Naive thymus-derived CD4-positive, alpha-beta T cell (primary cell): ENCODE measurements at regions of chr3 and their contacts with region 1.

Region 1: GRCh38 chr3:148991194-148992026 is at the start of gene GYG1:
- DNase-seq: peak; percentile 56 to 78 (median 70)
- ATAC-seq: peak; percentile 91
- H3K4me3 ChIP-seq: peak within 1 kb of the TSS; percentile 77
- H3K4me3 Mint-ChIP-seq: peak within 1 kb of the TSS; percentile 70 to 91 (median 87)
- H3K27ac ChIP-seq: peak within 1 kb of the TSS; percentile 76
- H3K27ac Mint-ChIP-seq: peak within 1 kb of the TSS; percentile 41 to 87 (median 80)
- H3K4me1 ChIP-seq: peaks cover 8 to 16% of the 10 kb centered on the region in 2 donors
- H3K4me1 Mint-ChIP-seq: peaks cover 5 to 41% (median 28%) of the 10 kb centered on the region in 7 donors
- H3K27me3 ChIP-seq: no peaks in the 10 kb centered on the region
- H3K27me3 Mint-ChIP-seq: peaks cover 0 to 3% (median 0%) of the 10 kb centered on the region in 5 donors
- total RNA-seq, gene GYG1: 15.5 to 39.3 (median 16.2) TPM

Region 2: DNA sequence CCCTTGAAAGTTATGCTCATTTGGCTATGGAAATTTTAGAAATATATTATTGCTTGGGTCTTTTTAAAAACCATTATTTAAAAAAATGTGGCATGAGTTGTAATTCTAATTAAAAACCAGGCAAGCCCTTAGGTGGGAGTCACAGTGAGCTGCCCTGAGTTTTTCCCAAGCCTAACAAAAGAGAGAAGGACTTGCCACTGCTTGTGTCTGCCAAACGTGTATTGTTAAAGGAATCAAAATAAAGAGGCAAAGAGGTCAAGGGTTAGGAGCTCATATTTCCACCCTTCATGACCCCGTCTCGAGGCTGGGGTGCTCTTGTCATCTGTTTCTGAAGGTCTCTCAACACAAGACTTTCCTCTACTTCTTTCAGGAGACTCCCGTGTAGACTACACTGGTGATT is 1261.1 kb before region 1 on chr3:
- CTCF ChIA-PET with region 1: no interaction called
- POLR2A ChIA-PET with region 1: no interaction called
- intact Hi-C with region 1: no loop called
- DNase-seq: no peak
- ATAC-seq: no peak
- H3K4me3 ChIP-seq: no peak overlapping the region
- H3K4me3 Mint-ChIP-seq: no peak overlapping the region
- H3K27ac ChIP-seq: no peak overlapping the region
- H3K27ac Mint-ChIP-seq: no peak overlapping the region
- H3K4me1 ChIP-seq: no peaks in the 10 kb centered on the region
- H3K4me1 Mint-ChIP-seq: no peaks in the 10 kb centered on the region
- H3K27me3 ChIP-seq: no peaks in the 10 kb centered on the region
- H3K27me3 Mint-ChIP-seq: no peaks in the 10 kb centered on the region

Region 3: GRCh38 chr3:148861277-148861869 is 130.0 kb before region 1 on chr3:
- CTCF ChIA-PET with region 1: no interaction called
- POLR2A ChIA-PET with region 1: no interaction called
- intact Hi-C with region 1: no loop called
- DNase-seq: peak in 5 of 9 donors; percentile 4 to 35 (median 14)
- ATAC-seq: peak; percentile 72
- H3K4me3 ChIP-seq: no peak overlapping the region
- H3K4me3 Mint-ChIP-seq: no peak overlapping the region
- H3K27ac ChIP-seq: no peak overlapping the region
- H3K27ac Mint-ChIP-seq: no peak overlapping the region
- H3K4me1 ChIP-seq: no peaks in the 10 kb centered on the region
- H3K4me1 Mint-ChIP-seq: no peaks in the 10 kb centered on the region
- H3K27me3 ChIP-seq: peaks cover 0 to 3% of the 10 kb centered on the region in 2 donors
- H3K27me3 Mint-ChIP-seq: peaks cover 4 to 22% (median 13%) of the 10 kb centered on the region in 5 donors

Region 4: DNA sequence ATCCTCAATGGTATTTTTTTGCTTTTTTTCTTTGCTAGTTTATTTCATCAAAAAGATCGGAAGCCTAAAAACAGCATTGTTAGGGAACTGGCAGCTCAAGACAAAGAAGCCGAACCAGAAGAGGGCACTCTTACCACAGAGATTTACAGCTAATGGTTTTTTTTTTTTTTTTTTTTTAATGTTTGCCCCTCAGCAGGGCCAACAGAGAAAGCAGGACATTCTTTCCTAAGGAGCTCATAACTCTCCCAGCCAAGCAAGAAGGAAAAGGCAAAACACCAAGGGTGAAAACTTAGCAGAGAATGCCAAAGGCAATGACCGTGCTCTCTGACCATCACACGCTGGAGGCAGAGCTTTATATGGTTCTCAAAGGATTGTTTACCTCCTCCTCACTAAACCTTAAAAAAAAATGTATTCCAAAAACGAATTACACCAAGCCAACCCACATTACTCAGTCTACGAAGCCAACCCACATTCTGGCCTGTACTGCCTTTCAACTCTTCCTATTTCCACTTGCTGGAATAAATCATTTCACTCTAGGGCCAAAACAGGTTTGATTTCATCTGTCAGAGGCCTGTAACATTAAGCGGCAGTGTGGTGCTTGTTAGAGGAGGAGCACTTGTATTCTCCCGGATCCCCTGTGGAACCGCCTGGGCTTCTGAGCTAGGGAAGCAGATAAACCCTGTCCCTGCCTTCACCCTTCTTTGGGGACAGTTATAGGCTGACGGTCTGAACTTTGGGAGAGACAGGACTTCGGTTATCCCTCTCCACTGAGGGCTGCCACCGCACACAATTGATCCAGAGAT is 35.7 kb before region 1 on chr3:
- CTCF ChIA-PET with region 1: no interaction called
- POLR2A ChIA-PET with region 1: no interaction called
- intact Hi-C with region 1: loop called (anchors 5 kb)
- DNase-seq: peak in 4 of 9 donors; percentile 13 to 41 (median 32)
- ATAC-seq: peak; percentile 41
- H3K4me3 ChIP-seq: no peak overlapping the region
- H3K4me3 Mint-ChIP-seq: no peak overlapping the region
- H3K27ac ChIP-seq: no peak overlapping the region
- H3K27ac Mint-ChIP-seq: no peak overlapping the region
- H3K4me1 ChIP-seq: no peaks in the 10 kb centered on the region
- H3K4me1 Mint-ChIP-seq: peaks cover 0 to 13% (median 6%) of the 10 kb centered on the region in 7 donors
- H3K27me3 ChIP-seq: no peaks in the 10 kb centered on the region
- H3K27me3 Mint-ChIP-seq: peaks cover 0 to 17% (median 0%) of the 10 kb centered on the region in 5 donors

Region 5: DNA sequence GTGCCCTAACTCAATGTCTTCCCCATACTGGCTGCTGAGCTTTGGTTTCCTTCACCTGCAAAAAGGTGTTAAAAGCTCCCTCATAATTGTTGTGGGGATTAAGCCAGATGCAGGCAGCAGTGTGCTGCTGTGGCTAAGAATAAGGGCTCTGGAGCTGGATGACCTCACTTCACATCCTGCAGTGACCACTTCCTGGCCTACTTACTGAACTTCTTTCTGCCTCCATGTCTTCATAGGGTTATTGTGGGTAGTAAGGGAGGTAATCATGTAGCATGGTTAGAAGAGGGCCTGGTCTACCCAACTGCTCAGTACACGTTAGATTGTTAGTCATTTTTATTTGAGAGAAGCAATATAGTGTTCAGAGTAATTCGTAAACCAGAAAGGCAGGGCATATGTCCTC is 18.3 kb after region 1 on chr3:
- CTCF ChIA-PET with region 1: no interaction called
- POLR2A ChIA-PET with region 1: no interaction called
- intact Hi-C with region 1: loop called in 1 of 2 experiments (anchors 1 kb)
- DNase-seq: no peak
- ATAC-seq: peak; percentile 91
- H3K4me3 ChIP-seq: no peak overlapping the region
- H3K4me3 Mint-ChIP-seq: peak overlapping the region in 1 of 10 donors; percentile 47
- H3K27ac ChIP-seq: no peak overlapping the region
- H3K27ac Mint-ChIP-seq: peak overlapping the region in 2 of 9 donors; percentile 25 to 56
- H3K4me1 ChIP-seq: peaks cover 0 to 37% of the 10 kb centered on the region in 2 donors
- H3K4me1 Mint-ChIP-seq: peaks cover 0 to 34% (median 4%) of the 10 kb centered on the region in 7 donors
- H3K27me3 ChIP-seq: no peaks in the 10 kb centered on the region
- H3K27me3 Mint-ChIP-seq: no peaks in the 10 kb centered on the region

Region 6: DNA sequence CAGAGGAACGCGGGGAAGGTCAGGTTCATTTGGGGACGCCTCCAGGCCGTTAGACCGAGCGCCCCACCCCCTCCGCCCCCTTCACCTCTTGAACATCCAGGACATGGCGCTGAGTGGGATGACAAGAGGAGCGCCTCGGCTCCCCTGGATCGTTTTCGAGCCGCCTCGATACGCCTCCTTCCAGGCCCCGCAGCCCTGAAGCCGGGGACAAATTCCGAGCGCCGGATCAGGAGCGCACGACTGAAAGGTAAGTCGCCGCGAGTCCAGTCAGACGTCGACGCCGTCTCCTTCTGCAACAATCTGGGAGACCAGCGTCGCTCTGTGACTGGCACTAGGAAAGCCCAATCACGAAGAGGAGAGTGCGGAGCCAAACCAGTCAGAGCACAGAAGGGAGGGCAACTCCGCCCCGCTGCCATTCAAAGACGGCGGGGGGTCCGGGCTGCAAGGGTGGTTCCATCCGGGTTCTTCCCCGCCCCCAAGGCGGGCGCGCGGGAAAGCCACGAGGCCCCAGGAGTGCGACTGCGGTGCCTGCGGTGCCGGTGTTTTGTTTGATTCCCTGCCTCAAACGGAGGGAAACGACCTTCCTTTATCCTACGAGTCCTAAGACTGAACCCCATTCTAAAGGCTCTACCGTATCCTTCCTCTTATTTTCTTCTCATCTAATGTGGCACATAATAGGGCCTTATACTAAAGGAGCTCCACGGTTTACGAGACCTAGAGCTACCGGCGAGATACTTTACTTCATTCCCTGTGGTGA is 95.0 kb after region 1 on chr3 and contains the start of gene HLTF:
- CTCF ChIA-PET with region 1: no interaction called
- POLR2A ChIA-PET with region 1: interaction called, 4 read pairs
- intact Hi-C with region 1: loop called (anchors 1 kb)
- DNase-seq: peak; percentile 75 to 93 (median 90)
- ATAC-seq: peak; percentile 99
- H3K4me3 ChIP-seq: peak within 1 kb of the TSS; percentile 97
- H3K4me3 Mint-ChIP-seq: peak within 1 kb of the TSS; percentile 84 to 100 (median 97)
- H3K27ac ChIP-seq: peak within 1 kb of the TSS; percentile 64
- H3K27ac Mint-ChIP-seq: peak within 1 kb of the TSS; percentile 54 to 95 (median 86)
- H3K4me1 ChIP-seq: peaks cover 4 to 18% of the 10 kb centered on the region in 2 donors
- H3K4me1 Mint-ChIP-seq: peaks cover 15 to 28% (median 22%) of the 10 kb centered on the region in 7 donors
- H3K27me3 ChIP-seq: no peaks in the 10 kb centered on the region
- H3K27me3 Mint-ChIP-seq: no peaks in the 10 kb centered on the region
- total RNA-seq, gene HLTF: 9.1 to 26.5 (median 17.3) TPM

Region 7: DNA sequence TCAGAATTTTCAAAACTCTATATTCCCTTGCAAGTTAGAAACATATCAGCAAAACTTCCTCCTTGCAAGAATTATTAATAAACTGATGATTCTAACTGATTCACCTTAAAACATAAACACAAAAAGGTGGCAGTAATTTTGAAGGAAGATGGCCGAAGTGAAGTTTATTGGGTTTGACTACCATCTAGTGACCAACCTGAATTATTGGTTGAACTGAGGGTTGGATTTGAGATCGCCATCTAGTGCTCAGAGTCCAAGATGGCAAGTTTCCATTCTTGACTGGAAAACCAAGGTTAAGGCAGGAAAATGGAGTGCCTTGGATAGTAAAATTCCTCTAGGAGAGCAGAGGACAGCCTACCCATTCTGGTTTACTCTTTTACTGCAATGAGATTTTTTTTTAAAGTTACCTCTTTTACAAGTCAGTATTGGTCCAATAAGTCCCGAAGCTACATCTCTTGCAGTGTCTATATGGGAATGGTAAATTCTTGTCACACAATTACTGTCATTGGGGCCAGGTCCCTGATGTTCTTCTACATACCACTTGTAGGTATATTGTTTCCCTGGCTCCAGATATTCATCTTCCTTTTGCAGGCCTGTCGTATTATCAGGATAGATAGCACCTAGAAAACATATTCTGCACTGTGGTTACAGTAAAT is 281.8 kb after region 1 on chr3:
- CTCF ChIA-PET with region 1: no interaction called
- POLR2A ChIA-PET with region 1: no interaction called
- intact Hi-C with region 1: loop called in 1 of 2 experiments (anchors 1 kb)
- DNase-seq: peak in 7 of 9 donors; percentile 19 to 67 (median 52)
- ATAC-seq: peak; percentile 92
- H3K4me3 ChIP-seq: no peak overlapping the region
- H3K4me3 Mint-ChIP-seq: no peak overlapping the region
- H3K27ac ChIP-seq: no peak overlapping the region
- H3K27ac Mint-ChIP-seq: no peak overlapping the region
- H3K4me1 ChIP-seq: peaks cover 4 to 13% of the 10 kb centered on the region in 2 donors
- H3K4me1 Mint-ChIP-seq: peaks cover 6 to 14% (median 13%) of the 10 kb centered on the region in 7 donors
- H3K27me3 ChIP-seq: no peaks in the 10 kb centered on the region
- H3K27me3 Mint-ChIP-seq: peaks cover 0 to 15% (median 0%) of the 10 kb centered on the region in 5 donors

Region 8: DNA sequence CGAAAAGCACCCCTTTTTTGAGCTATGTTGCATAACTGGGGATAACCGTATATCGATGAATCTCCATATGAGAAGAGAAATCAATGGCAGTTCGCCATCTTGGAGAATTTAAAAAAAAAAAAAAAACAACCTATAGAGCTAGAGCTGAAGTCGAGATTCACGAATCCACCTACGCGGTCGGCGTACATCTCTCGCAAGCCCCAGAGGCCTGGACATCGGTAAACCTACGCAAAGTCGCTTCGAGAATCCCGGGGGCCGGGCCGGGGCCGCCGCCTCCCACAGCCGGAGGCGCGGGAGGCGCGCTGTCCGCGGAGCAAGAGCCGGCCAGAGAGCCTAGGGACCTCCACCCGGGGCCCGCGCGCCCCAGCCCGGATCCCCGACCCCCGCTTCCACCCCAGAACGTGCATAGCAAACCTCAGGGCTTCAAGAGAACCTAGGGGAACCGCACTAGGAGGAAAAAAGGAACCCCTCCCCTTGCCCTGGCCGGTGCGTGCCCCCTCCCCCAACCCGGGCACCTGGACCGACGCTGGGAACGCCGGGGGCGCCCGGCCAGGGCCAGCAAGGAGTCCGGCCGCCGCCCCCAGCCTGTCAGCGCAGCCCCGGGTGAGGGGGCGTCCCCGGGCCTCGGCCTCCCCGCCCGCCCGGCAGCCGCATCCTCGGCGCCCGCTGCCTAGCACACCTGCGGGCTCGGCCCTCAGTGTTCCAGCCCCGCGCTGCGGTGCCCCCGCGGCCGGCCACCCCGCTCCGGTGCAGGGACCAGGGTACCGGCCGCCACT is 978.7 kb after region 1 on chr3:
- CTCF ChIA-PET with region 1: no interaction called
- POLR2A ChIA-PET with region 1: no interaction called
- intact Hi-C with region 1: loop called in 1 of 2 experiments (anchors 1 kb)
- DNase-seq: peak; percentile 54 to 81 (median 75)
- ATAC-seq: peak; percentile 64
- H3K4me3 ChIP-seq: peak overlapping the region; percentile 53
- H3K4me3 Mint-ChIP-seq: peak overlapping the region; percentile 85 to 96 (median 92)
- H3K27ac ChIP-seq: peak overlapping the region; percentile 63
- H3K27ac Mint-ChIP-seq: peak overlapping the region in 8 of 9 donors; percentile 60 to 94 (median 86)
- H3K4me1 ChIP-seq: peaks cover 0 to 4% of the 10 kb centered on the region in 2 donors
- H3K4me1 Mint-ChIP-seq: peaks cover 16 to 26% (median 20%) of the 10 kb centered on the region in 7 donors
- H3K27me3 ChIP-seq: peaks cover 0 to 5% of the 10 kb centered on the region in 2 donors
- H3K27me3 Mint-ChIP-seq: peaks cover 6 to 55% (median 26%) of the 10 kb centered on the region in 5 donors